ENCODE measurements at regions of chr17 and their contacts with region 1.

Region 1: DNA sequence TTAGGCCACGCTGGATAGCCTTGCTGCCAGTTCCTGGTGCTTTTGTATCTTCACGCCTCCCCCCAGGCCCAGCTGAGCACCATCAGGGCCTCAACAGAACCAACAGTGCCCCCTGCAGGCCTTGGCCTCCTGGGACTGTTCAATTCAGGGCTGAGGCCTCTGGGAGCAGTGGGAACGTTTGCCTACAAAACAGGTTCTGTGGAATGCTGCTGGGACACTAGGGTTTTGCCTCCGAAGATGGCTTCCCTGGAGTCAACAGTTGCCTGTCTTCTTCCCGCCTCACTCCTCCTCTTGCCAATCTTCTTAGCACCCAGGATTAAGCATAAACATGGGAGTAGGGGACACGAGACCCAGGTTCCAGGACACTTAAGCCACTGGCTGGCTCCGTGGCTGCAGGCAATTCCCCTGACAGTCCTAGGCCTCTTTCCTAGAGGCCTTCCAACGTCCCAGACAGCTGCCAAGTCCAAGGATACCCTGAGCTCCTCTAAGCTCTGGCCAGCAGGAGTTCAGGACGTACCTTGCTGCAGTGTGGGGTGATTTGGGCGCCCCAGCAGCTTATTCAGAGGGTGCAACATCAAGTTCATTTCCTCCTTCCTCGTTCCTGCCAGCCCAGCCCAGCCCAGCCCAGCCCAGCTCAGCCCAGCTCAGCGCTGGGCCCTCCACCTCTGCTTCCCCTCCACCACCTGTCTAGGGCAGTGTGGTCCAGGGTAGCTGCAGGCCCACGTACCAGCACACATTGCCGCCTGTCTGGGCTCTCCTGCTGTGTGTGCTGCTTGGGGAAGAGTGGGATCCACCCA is 246.6 kb upstream of the RPL38 start:
- DNase-seq: peak; percentile 56
- ATAC-seq: peak; percentile 90
- H3K4me3 ChIP-seq: no peak overlapping the region
- H3K27ac ChIP-seq: no peak overlapping the region
- H3K4me1 ChIP-seq: no peaks in the 10 kb centered on the region
- H3K27me3 ChIP-seq: peaks cover 3 to 20% of the 10 kb centered on the region in 2 experiments; a peak in 4 of 5 replicates
- CTCF ChIP-seq: peak; percentile 91
- EP300 ChIP-seq: no peak
- POLR2A ChIP-seq: no peak
- RAD21 ChIP-seq: peak; percentile 78

Region 2: GRCh38 chr17:73429440-73430164 is 527.3 kb before region 1 on chr17:
- CTCF ChIA-PET with region 1: interaction called, 22 read pairs
- POLR2A ChIA-PET with region 1: no interaction called
- in situ Hi-C with region 1: loop called (anchors 25 kb)
- intact Hi-C with region 1: no loop called
- DNase-seq: peak; percentile 59
- ATAC-seq: peak; percentile 95
- H3K4me3 ChIP-seq: no peak overlapping the region
- H3K27ac ChIP-seq: no peak overlapping the region
- H3K4me1 ChIP-seq: peaks cover 7% of the 10 kb centered on the region; the same call in 1 of the 2 replicates
- H3K27me3 ChIP-seq: peaks cover 8 to 56% of the 10 kb centered on the region in 2 experiments
- CTCF ChIP-seq: peak; percentile 96
- EP300 ChIP-seq: no peak
- POLR2A ChIP-seq: no peak
- RAD21 ChIP-seq: peak; percentile 90

Region 3: DNA sequence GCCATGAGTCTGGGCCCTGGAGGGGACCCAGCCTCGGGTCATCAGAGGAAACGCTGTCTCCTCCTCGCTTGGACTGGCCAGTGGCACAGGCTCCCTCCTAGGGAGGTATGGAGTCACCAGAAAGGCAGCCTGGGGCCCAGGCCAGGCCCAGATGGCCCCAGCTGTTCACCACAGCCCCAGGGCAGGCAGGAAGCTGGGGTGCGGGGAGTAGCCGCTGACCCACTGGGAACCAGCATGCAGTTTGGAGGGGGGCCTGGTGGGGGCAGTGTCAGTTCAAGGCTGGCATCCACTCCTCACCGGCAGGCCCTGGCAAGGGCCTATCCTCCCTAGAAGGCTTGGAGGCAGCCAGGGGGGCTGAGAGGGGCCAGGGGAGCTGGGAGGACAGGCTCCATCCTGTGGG is 361.4 kb before region 1 on chr17:
- CTCF ChIA-PET with region 1: no interaction called
- POLR2A ChIA-PET with region 1: no interaction called
- in situ Hi-C with region 1: no loop called
- intact Hi-C with region 1: loop called (anchors 5 kb)
- DNase-seq: no peak
- ATAC-seq: peak; percentile 61
- H3K4me3 ChIP-seq: no peak overlapping the region
- H3K27ac ChIP-seq: no peak overlapping the region
- H3K4me1 ChIP-seq: no peaks in the 10 kb centered on the region
- H3K27me3 ChIP-seq: peaks cover 13 to 76% of the 10 kb centered on the region in 2 experiments; a peak in 4 of 5 replicates
- CTCF ChIP-seq: peak; percentile 78
- EP300 ChIP-seq: no peak
- POLR2A ChIP-seq: no peak
- RAD21 ChIP-seq: peak; percentile 37; the same call in 1 of the 2 replicates

Region 4: GRCh38 chr17:73645050-73645978 is 311.6 kb before region 1 on chr17:
- CTCF ChIA-PET with region 1: no interaction called
- POLR2A ChIA-PET with region 1: no interaction called
- in situ Hi-C with region 1: loop called (anchors 10 kb)
- intact Hi-C with region 1: loop called (anchors 5 kb)
- DNase-seq: no peak
- ATAC-seq: peak; percentile 17
- H3K4me3 ChIP-seq: peak overlapping the region in 1 of 3 experiments; percentile 30; a peak in 1 of 6 replicates
- H3K27ac ChIP-seq: no peak overlapping the region
- H3K4me1 ChIP-seq: no peaks in the 10 kb centered on the region; the same call in 1 of the 2 replicates
- H3K27me3 ChIP-seq: peaks cover 27 to 87% of the 10 kb centered on the region in 2 experiments
- CTCF ChIP-seq: peak; percentile 12; the same call in 1 of the 2 replicates
- EP300 ChIP-seq: no peak
- POLR2A ChIP-seq: no peak
- RAD21 ChIP-seq: no peak

Region 5: DNA sequence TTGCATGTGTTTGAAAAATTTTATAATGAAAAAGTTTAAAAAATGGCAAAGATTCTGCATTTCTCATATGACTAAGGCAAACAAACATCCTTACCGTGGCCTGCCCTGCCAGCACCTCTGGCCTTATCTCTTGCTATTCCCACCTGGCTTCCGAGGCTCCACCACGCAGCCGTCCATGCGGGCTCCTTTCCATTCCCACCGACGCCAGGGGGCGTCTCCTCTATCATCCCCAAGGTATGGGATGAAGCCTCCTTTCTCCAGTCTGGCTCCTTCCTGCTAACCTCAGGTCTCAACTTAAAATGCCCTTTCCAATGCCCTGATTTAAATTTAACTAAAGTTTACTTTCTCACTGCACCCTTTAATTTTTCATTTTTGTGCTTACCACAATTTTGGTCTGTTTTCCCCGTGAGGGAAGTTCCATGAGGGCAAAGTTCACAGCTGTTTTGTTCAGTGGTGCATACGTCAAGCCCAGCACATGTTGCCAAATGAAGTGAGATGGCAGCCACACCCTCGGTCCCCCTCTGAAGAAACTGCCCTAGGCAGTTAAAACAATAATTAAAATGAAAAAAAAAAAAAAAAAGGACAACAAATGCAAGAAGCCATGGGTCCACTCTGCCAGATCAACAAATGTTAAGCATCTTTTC is 299.3 kb before region 1 on chr17:
- CTCF ChIA-PET with region 1: interaction called, 20 read pairs
- POLR2A ChIA-PET with region 1: no interaction called
- in situ Hi-C with region 1: no loop called
- intact Hi-C with region 1: loop called (anchors 5 kb)
- DNase-seq: peak; percentile 53
- ATAC-seq: peak; percentile 98
- H3K4me3 ChIP-seq: no peak overlapping the region
- H3K27ac ChIP-seq: no peak overlapping the region
- H3K4me1 ChIP-seq: no peaks in the 10 kb centered on the region
- H3K27me3 ChIP-seq: peaks cover 0 to 13% of the 10 kb centered on the region in 2 experiments; a peak in 3 of 5 replicates
- CTCF ChIP-seq: peak; percentile 79
- EP300 ChIP-seq: no peak
- POLR2A ChIP-seq: no peak
- RAD21 ChIP-seq: peak; percentile 59

Measured in HepG2 (cell line).